ENCODE measurements at regions of chr1 and their contacts with region 1.

Region 1: GRCh38 chr1:42979896-42980800 is 21.5 kb upstream of the SLC2A1 start:
- DNase-seq: peak; percentile 61
- ATAC-seq: no peak
- H3K4me3 ChIP-seq: no peak overlapping the region
- H3K4me3 Mint-ChIP-seq: no peak overlapping the region
- H3K27ac ChIP-seq: no peak overlapping the region
- H3K27ac Mint-ChIP-seq: peak overlapping the region; percentile 69
- H3K4me1 ChIP-seq: peaks cover 10 to 11% of the 10 kb centered on the region in 2 donors
- H3K4me1 Mint-ChIP-seq: peaks cover 19% of the 10 kb centered on the region
- H3K27me3 ChIP-seq: peaks cover 0 to 2% (median 0%) of the 10 kb centered on the region in 4 experiments
- H3K27me3 Mint-ChIP-seq: no peaks in the 10 kb centered on the region
- CTCF ChIP-seq: no peak

Region 2: GRCh38 chr1:42825036-42825851 is 154.9 kb before region 1 on chr1:
- CTCF ChIA-PET with region 1: no interaction called
- POLR2A ChIA-PET with region 1: no interaction called
- intact Hi-C with region 1: no loop called
- DNase-seq: no peak
- ATAC-seq: no peak
- H3K4me3 ChIP-seq: no peak overlapping the region
- H3K4me3 Mint-ChIP-seq: no peak overlapping the region
- H3K27ac ChIP-seq: no peak overlapping the region
- H3K27ac Mint-ChIP-seq: no peak overlapping the region
- H3K4me1 ChIP-seq: no peaks in the 10 kb centered on the region
- H3K4me1 Mint-ChIP-seq: no peaks in the 10 kb centered on the region
- H3K27me3 ChIP-seq: no peaks in the 10 kb centered on the region
- H3K27me3 Mint-ChIP-seq: no peaks in the 10 kb centered on the region
- CTCF ChIP-seq: no peak

Region 3: GRCh38 chr1:43048601-43049011 is 68.5 kb after region 1 on chr1:
- CTCF ChIA-PET with region 1: no interaction called
- POLR2A ChIA-PET with region 1: no interaction called
- intact Hi-C with region 1: loop called (anchors 10 kb)
- DNase-seq: no peak
- ATAC-seq: no peak
- H3K4me3 ChIP-seq: no peak overlapping the region
- H3K4me3 Mint-ChIP-seq: no peak overlapping the region
- H3K27ac ChIP-seq: no peak overlapping the region
- H3K27ac Mint-ChIP-seq: no peak overlapping the region
- H3K4me1 ChIP-seq: no peaks in the 10 kb centered on the region
- H3K4me1 Mint-ChIP-seq: no peaks in the 10 kb centered on the region
- H3K27me3 ChIP-seq: no peaks in the 10 kb centered on the region
- H3K27me3 Mint-ChIP-seq: peaks cover 7% of the 10 kb centered on the region
- CTCF ChIP-seq: no peak